ENCODE measurements at regions of chr13 and their contacts with region 1.

Region 1: GRCh38 chr13:31424117-31424729 is 224.4 kb downstream of the B3GLCT start:
- DNase-seq: peak; percentile 84
- H3K4me3 Mint-ChIP-seq: no peak overlapping the region
- H3K27ac Mint-ChIP-seq: no peak overlapping the region
- H3K4me1 Mint-ChIP-seq: peaks cover 3% of the 10 kb centered on the region
- H3K27me3 Mint-ChIP-seq: no peaks in the 10 kb centered on the region

Region 2: GRCh38 chr13:31236211-31236786 is 187.9 kb before region 1 on chr13:
- intact Hi-C with region 1: loop called (anchors 1 kb)
- DNase-seq: no peak
- H3K4me3 Mint-ChIP-seq: no peak overlapping the region
- H3K27ac Mint-ChIP-seq: no peak overlapping the region
- H3K4me1 Mint-ChIP-seq: no peaks in the 10 kb centered on the region
- H3K27me3 Mint-ChIP-seq: no peaks in the 10 kb centered on the region